Endothelial cell of umbilical vein (primary cell): ENCODE measurements at regions of chr17 and their contacts with region 1.

Region 1: GRCh38 chr17:31453896-31454295 is 62.4 kb downstream of the RAB11FIP4 start:
- DNase-seq: no peak
- H3K4me3 ChIP-seq: no peak overlapping the region
- H3K27ac ChIP-seq: no peak overlapping the region
- H3K4me1 ChIP-seq: no peaks in the 10 kb centered on the region
- H3K27me3 ChIP-seq: peaks cover 2 to 5% of the 10 kb centered on the region in 2 experiments
- CTCF ChIP-seq: no peak
- POLR2A ChIP-seq: no peak

Region 2: DNA sequence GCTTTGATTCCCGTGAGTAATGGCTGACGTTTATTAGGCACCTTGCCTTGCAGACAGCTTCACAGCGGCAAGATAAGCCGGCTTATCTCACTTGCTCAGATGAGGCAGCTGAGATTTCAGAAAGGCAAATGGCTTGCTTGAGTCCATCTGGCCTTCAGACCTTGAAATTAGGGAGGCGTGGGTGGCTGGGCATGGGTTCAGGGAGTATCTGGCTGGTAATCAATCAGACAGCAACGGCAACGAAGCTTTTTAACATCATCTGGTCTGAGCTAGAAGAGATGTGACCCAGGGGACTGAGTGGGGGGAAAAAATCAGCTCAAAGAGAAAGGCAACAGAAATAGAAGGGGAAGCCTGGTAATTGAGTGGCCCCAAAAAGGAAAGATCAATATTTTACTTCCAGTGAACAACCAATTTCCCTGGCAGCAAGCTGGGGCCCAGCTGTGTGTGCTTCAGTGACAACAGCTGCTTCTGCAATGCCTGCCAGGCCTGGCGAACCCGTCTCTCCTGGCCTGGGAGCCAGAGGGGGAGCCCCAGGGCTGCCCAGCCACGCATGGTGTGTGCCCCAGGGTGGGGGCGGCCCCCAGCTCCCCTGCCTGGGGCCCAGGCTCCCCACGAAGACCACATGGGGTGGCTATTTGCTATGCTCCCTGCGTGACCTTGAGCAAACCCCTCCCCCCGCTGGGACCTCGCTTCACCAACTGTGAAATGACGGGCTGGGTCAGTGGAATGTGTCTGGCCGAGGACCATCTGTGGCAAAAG is 28.4 kb before region 1 on chr17:
- CTCF ChIA-PET with region 1: no interaction called
- POLR2A ChIA-PET with region 1: no interaction called
- dilution Hi-C with region 1: no loop called
- intact Hi-C with region 1: no loop called
- DNase-seq: peak; percentile 13
- H3K4me3 ChIP-seq: no peak overlapping the region
- H3K27ac ChIP-seq: no peak overlapping the region
- H3K4me1 ChIP-seq: no peaks in the 10 kb centered on the region
- H3K27me3 ChIP-seq: no peaks in the 10 kb centered on the region
- CTCF ChIP-seq: no peak
- POLR2A ChIP-seq: no peak

Region 3: GRCh38 chr17:31469959-31470358 is 16.1 kb after region 1 on chr17:
- CTCF ChIA-PET with region 1: interaction called, 3 read pairs
- POLR2A ChIA-PET with region 1: interaction called, 12 read pairs
- dilution Hi-C with region 1: no loop called
- intact Hi-C with region 1: no loop called
- DNase-seq: no peak
- H3K4me3 ChIP-seq: no peak overlapping the region
- H3K27ac ChIP-seq: no peak overlapping the region
- H3K4me1 ChIP-seq: no peaks in the 10 kb centered on the region
- H3K27me3 ChIP-seq: peaks cover 0 to 2% of the 10 kb centered on the region in 2 experiments
- CTCF ChIP-seq: no peak
- POLR2A ChIP-seq: no peak

Region 4: DNA sequence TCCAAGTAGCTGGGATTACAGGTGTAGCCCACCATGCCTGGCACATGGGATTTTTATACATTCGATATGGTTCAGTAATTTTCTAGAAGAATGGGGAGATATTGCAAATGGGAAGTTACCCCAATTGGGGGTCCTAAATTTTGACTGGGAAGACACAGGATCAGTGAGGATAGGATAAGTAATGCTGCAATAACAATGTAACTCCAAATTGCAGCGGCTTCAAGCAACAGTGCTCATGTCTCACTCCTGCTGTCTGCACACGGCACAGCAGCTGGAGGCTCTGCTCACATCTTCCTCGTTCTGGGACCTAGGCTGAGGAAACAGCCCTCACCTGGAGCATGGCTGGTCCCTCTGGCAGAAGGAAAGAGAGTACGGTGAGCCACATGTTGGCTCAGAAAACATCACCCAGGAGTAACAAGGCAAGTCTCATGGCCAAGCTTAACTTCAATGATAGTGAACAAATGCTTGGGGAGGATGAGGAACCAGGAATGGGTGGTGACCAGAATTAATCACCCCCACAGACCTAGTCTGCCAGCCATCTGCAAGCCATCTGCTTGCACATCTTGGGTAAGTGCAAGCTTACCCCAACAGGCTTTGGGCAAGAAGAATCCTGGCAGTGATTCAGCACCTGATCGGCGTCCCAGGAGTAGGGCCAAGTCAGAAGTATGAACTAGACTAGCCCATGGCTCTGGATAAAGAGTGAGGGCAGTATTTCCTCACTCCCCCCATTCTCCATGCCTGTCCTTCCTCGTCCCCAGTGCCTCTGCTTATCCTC is 176.0 kb after region 1 on chr17:
- CTCF ChIA-PET with region 1: no interaction called
- POLR2A ChIA-PET with region 1: no interaction called
- dilution Hi-C with region 1: no loop called
- intact Hi-C with region 1: no loop called
- DNase-seq: no peak
- H3K4me3 ChIP-seq: no peak overlapping the region
- H3K27ac ChIP-seq: no peak overlapping the region
- H3K4me1 ChIP-seq: peaks cover 6% of the 10 kb centered on the region
- H3K27me3 ChIP-seq: no peaks in the 10 kb centered on the region
- CTCF ChIP-seq: no peak
- POLR2A ChIP-seq: no peak

Region 5: GRCh38 chr17:31825961-31826691 is 372.2 kb after region 1 on chr17:
- CTCF ChIA-PET with region 1: no interaction called
- POLR2A ChIA-PET with region 1: no interaction called
- dilution Hi-C with region 1: no loop called
- intact Hi-C with region 1: no loop called
- DNase-seq: no peak
- H3K4me3 ChIP-seq: no peak overlapping the region
- H3K27ac ChIP-seq: no peak overlapping the region
- H3K4me1 ChIP-seq: peaks cover 13% of the 10 kb centered on the region
- H3K27me3 ChIP-seq: no peaks in the 10 kb centered on the region
- CTCF ChIP-seq: no peak
- POLR2A ChIP-seq: no peak